Calu3 (cell line): ENCODE measurements at regions of chr17 and their contacts with region 1.

Region 1: DNA sequence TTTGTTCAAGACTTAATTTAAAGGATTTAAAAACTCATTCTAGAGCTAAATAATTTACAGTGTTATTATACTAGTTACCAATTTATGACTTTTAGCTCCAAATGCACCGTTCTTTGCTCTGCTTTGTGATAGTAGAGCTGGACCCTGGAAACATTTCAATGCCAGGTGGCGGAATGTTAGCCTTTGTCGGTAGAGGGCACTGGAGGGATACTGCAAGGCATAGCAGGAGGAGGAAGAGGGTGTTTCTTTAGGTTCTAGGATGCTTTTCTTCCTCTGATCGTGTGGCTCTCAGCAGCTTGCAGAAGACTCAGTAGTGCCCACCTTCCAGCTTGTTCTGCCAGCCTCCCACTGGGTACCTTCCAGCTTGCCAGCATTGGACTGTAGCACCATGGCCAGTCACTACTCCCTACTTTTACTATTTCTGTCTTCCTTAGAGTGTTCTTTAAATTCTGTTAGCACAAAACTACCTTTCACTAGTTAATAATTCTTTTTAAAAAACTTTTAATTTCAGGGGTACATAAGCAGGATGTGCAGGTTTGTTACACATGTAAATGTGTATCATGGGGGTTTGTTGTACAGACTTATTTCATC is 325.3 kb downstream of the UTP18 start:
- DNase-seq: peak; percentile 63
- H3K4me3 Mint-ChIP-seq: no peak overlapping the region
- H3K27ac Mint-ChIP-seq: no peak overlapping the region
- H3K4me1 Mint-ChIP-seq: no peaks in the 10 kb centered on the region
- H3K27me3 Mint-ChIP-seq: peaks cover 58% of the 10 kb centered on the region
- CTCF ChIP-seq: peak; percentile 73

Region 2: GRCh38 chr17:51189628-51190027 is 396.0 kb before region 1 on chr17:
- CTCF ChIA-PET with region 1: no interaction called
- intact Hi-C with region 1: no loop called
- DNase-seq: no peak
- H3K4me3 Mint-ChIP-seq: no peak overlapping the region
- H3K27ac Mint-ChIP-seq: no peak overlapping the region
- H3K4me1 Mint-ChIP-seq: no peaks in the 10 kb centered on the region
- H3K27me3 Mint-ChIP-seq: no peaks in the 10 kb centered on the region
- CTCF ChIP-seq: no peak

Region 3: DNA sequence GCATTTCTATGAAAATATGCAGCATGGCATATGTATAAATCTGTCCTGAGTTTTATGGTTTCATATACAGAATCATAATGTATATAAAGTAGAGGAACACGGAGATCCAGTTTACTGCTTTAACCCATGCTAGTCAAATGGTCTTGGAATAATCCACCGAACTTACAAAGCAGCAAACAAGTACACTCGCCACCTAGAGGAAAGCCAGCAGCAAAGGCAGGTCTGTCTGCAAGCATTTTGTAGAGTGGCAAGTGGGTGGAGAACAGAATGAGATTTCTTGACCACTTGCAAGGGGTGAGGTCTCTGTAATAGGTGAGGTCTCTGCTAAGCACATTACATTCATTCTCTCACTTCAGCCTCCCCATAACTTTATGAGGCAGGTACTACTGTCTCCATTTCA is 264.6 kb after region 1 on chr17:
- CTCF ChIA-PET with region 1: no interaction called
- intact Hi-C with region 1: loop called (anchors 10 kb)
- DNase-seq: no peak
- H3K4me3 Mint-ChIP-seq: no peak overlapping the region
- H3K27ac Mint-ChIP-seq: no peak overlapping the region
- H3K4me1 Mint-ChIP-seq: peaks cover 6% of the 10 kb centered on the region
- H3K27me3 Mint-ChIP-seq: peaks cover 92% of the 10 kb centered on the region
- CTCF ChIP-seq: no peak

Region 4: GRCh38 chr17:52297230-52298010 is 711.8 kb after region 1 on chr17:
- CTCF ChIA-PET with region 1: no interaction called
- intact Hi-C with region 1: loop called (anchors 5 kb)
- DNase-seq: peak; percentile 57
- H3K4me3 Mint-ChIP-seq: no peak overlapping the region
- H3K27ac Mint-ChIP-seq: no peak overlapping the region
- H3K4me1 Mint-ChIP-seq: peaks cover 24% of the 10 kb centered on the region
- H3K27me3 Mint-ChIP-seq: no peaks in the 10 kb centered on the region
- CTCF ChIP-seq: peak; percentile 61